Calu3 (cell line): ENCODE measurements at regions of chr20 and their contacts with region 1.

Region 1: GRCh38 chr20:19784511-19785172 is 26.6 kb downstream of the RIN2 start:
- DNase-seq: peak; percentile 25
- H3K4me3 Mint-ChIP-seq: no peak overlapping the region
- H3K27ac Mint-ChIP-seq: no peak overlapping the region
- H3K4me1 Mint-ChIP-seq: peaks cover 17% of the 10 kb centered on the region
- H3K27me3 Mint-ChIP-seq: no peaks in the 10 kb centered on the region
- CTCF ChIP-seq: no peak

Region 2: GRCh38 chr20:19770375-19770774 is 14.3 kb before region 1 on chr20:
- CTCF ChIA-PET with region 1: no interaction called
- intact Hi-C with region 1: no loop called
- DNase-seq: no peak
- H3K4me3 Mint-ChIP-seq: no peak overlapping the region
- H3K27ac Mint-ChIP-seq: no peak overlapping the region
- H3K4me1 Mint-ChIP-seq: peaks cover 15% of the 10 kb centered on the region
- H3K27me3 Mint-ChIP-seq: no peaks in the 10 kb centered on the region
- CTCF ChIP-seq: no peak

Region 3: DNA sequence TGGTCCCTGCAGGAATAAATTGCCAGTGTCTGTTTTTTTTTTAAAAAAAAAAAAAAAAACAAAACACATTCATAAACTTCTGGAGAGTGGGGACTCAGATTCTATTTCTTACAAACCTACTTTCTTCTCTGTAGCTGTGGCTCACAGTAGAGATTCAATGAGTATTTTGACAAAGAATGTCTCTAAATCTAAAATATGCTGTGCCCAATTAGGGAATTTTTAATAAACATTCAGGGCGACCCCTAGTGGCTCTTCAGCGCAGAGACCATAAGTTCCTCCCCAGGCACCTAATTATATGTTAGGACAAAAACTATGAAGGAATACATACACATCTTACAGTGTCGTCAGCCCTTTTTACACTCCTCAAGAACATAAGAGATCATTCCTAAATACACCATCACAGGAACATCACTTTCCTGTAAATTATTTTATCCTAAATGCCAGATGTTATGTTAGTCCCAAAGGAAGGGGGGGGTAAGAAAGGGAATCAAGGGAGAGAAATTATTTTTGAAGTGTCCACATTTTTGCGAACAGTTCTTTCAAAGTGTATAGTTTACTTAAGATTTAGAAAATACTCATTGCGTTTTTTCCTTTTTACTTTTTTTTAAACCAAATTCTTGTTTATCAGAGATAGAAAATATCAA is 210.7 kb after region 1 on chr20:
- CTCF ChIA-PET with region 1: no interaction called
- intact Hi-C with region 1: loop called (anchors 1 kb)
- DNase-seq: no peak
- H3K4me3 Mint-ChIP-seq: no peak overlapping the region
- H3K27ac Mint-ChIP-seq: no peak overlapping the region
- H3K4me1 Mint-ChIP-seq: peaks cover 8% of the 10 kb centered on the region
- H3K27me3 Mint-ChIP-seq: no peaks in the 10 kb centered on the region
- CTCF ChIP-seq: peak; percentile 21